Dorsolateral prefrontal cortex (tissue), 120 donors: ENCODE measurements at regions of chr11 and their contacts with region 1.

Region 1: GRCh38 chr11:22625448-22626287 is at the start of gene FANCF:
- DNase-seq: peak; percentile 66 to 96 (median 90)
- H3K4me3 ChIP-seq: peak within 1 kb of the TSS; percentile 58 to 98 (median 88)
- H3K27ac ChIP-seq: peak within 1 kb of the TSS; percentile 24 to 94 (median 83)
- H3K27me3 ChIP-seq: no peaks in the 10 kb centered on the region
- CTCF ChIP-seq: peak in 4 of 56 donors; percentile 0 to 47 (median 3)
- total RNA-seq, gene FANCF: 4.0 to 9.2 (median 6.6) TPM

Region 2: DNA sequence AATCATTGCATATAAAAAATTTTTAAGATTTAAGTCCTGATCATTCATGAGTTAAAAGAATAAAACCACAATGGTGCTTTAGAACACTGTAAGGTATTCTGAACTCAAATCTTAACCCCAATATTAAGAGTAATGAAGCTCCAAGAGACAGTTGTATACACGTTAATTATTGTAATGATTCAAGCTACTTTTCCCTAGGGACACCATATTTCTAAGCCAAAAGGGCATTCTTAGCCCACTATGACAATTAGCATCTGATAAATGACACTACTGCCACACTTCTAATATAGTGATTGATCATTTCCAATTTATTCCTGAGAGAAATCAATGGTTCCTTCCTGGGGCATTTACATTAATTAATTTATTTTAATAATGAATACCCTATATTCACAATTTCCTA is 21.7 kb before region 1 on chr11:
- intact Hi-C with region 1: no loop called
- DNase-seq: no peak
- H3K4me3 ChIP-seq: no peak overlapping the region
- H3K27ac ChIP-seq: no peak overlapping the region
- H3K27me3 ChIP-seq: peaks cover 0 to 4% (median 0%) of the 10 kb centered on the region in 45 donors
- CTCF ChIP-seq: no peak

Region 3: DNA sequence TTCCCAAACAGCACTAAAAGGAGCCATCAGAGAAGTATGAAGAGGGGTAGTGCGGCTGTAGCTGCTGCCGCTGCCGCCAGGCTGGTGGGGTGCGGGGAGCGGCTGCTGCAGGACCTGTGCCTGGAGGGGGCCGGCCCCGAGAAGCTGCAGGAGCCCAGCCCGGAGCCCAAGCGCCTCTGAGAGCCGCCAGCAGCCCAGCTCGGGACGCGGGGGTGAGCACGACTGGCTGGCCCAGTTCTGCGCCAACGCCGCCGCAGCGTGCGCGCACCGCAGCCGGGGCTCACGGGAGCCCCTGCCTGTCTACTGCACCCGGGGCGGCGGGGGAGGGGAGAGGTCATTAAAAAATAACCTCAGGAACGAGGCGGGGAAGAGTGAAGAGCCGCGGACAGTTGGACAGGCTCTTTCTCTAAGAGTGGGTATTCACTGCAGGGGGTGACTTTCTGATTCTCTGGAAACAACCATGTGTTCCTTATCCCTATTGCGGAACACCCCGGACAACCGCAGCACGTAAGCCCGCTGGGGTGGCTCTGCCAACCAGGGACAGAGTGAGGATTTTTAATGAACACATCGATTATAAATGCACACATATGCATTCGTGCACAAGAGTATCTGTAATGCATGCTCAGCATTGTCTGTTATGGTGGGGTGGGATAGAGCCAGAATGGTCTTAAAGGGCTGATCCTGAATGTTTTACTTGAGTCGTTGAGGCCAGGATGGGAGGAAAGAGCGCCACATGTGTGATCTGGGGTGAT is 41.2 kb after region 1 on chr11:
- intact Hi-C with region 1: loop called in 1 of 2 experiments (anchors 5 kb)
- DNase-seq: peak in 9 of 10 donors; percentile 5 to 79 (median 66)
- H3K4me3 ChIP-seq: peak overlapping the region; percentile 41 to 81 (median 65)
- H3K27ac ChIP-seq: peak overlapping the region in 34 of 59 donors; percentile 6 to 71 (median 51)
- H3K27me3 ChIP-seq: no peaks in the 10 kb centered on the region
- CTCF ChIP-seq: peak in 5 of 56 donors; percentile 7 to 17 (median 9)

Region 4: DNA sequence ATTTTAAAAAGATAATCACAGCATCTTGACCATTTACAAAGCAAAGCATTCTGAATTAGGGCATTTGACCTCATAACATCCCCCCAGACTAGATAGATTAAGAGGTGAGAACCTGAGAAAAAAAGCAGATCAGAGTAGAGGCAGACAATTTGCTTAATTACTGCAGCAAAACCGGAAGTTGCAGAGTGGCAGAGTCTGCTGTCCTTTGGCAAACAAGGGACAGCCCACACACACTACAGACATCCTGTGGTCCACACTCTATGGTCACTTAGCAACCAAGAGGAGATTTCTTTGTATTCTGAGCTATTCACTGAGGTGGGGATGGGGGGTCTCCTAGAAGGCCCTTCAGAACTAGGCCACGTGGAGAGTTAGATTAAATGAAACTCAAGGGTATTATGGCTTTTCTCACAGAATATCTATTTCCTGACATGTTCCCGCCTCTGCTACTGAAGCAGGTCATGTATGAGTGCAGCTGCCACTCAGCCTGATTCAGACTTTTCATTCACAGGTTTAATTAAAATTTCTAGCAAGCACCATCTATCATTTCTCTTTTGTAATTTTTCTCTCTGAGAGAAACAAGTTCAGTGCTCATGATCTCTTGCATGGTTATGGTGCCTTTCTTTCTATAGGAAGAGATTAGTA is 155.4 kb after region 1 on chr11:
- intact Hi-C with region 1: loop called (anchors 5 kb)
- DNase-seq: no peak
- H3K4me3 ChIP-seq: no peak overlapping the region
- H3K27ac ChIP-seq: peak overlapping the region in 10 of 59 donors; percentile 5 to 92 (median 22)
- H3K27me3 ChIP-seq: no peaks in the 10 kb centered on the region
- CTCF ChIP-seq: no peak

Region 5: DNA sequence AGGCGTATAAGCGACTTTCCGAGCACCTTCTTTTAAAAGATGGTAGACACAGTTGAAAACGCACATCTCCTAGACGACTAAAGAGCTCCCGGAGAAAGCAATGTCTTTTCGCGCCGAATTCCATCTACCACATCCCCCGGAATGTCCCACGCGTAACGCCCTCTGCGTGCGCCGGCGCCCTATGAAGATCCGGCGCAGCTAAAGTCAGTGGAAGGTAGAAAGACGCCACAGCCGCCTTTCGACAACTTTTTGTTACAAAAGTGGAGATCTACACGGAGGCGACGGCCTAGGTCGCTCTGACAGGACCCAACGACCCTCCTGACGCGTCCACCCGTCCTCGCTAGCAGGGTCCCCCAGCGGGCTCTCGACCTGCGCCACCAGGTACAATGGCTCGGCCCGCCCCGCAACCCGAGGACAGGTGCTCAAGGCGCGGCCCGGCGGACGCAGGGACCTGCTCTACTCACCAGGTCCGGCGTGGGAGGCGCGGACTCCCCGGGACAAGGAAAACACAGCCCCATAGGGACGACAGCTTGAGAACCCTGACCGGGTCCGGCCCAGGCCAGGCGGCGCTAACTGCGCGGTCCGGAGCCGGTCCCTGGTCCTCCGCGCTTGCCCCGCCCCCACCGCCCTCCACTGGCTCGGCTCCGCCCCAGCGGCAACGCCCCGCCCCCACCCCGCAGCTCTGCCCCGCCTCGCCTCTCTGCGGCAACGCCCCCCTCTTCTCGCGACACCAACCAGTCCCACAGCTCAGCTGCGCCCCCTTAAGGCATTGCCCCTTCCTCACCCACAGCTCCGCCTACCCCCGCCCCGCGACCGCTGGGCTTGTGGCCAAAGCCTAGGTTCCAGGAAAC is 203.8 kb after region 1 on chr11 and contains the start of gene SVIP:
- intact Hi-C with region 1: loop called in 1 of 2 experiments (anchors 5 kb)
- DNase-seq: peak; percentile 88 to 98 (median 93)
- H3K4me3 ChIP-seq: peak within 1 kb of the TSS; percentile 64 to 100 (median 93)
- H3K27ac ChIP-seq: peak within 1 kb of the TSS; percentile 56 to 96 (median 88)
- H3K27me3 ChIP-seq: no peaks in the 10 kb centered on the region
- CTCF ChIP-seq: peak; percentile 54 to 89 (median 78)
- total RNA-seq, gene SVIP: 24.9 to 78.0 (median 51.0) TPM